AG04449 (cell line): ENCODE measurements at regions of chr3 and their contacts with region 1.

Region 1: GRCh38 chr3:168047190-168047795 is 48.4 kb downstream of the GOLIM4 start:
- DNase-seq: no peak
- H3K4me3 ChIP-seq: no peak overlapping the region
- CTCF ChIP-seq: peak; percentile 49

Region 2: DNA sequence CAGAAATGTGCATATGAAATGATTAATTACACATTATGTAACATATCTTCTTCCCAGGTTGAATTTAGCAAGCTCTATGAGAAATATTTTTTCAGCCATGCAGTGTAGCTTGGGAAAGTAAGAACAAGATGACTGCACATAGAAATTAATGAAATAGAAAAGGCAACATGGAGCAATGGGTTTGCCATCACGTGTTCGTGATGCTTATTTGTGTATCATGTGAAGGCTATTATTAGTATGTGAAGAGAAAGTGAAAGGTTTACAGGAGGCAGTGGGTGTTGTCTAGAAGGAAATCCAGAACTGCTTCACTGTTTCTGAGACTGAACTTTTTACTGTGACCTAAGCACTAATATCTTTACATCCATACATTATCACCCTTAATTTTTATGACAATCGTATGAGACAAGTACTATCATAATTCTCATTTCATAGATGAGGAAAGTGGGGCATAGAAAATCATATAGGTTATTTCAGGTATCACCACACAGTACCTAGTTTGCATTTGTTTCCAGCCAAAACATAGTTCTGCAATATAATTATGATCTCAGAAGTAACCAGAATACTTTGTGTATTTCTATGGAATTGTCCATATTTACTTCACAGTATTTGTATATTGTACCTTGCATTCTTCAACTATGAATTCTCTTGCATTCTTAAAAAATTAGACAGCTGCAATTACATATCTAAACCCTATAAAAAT is 296.9 kb before region 1 on chr3:
- CTCF ChIA-PET with region 1: no interaction called
- POLR2A ChIA-PET with region 1: no interaction called
- DNase-seq: no peak
- H3K4me3 ChIP-seq: no peak overlapping the region
- CTCF ChIP-seq: no peak

Region 3: DNA sequence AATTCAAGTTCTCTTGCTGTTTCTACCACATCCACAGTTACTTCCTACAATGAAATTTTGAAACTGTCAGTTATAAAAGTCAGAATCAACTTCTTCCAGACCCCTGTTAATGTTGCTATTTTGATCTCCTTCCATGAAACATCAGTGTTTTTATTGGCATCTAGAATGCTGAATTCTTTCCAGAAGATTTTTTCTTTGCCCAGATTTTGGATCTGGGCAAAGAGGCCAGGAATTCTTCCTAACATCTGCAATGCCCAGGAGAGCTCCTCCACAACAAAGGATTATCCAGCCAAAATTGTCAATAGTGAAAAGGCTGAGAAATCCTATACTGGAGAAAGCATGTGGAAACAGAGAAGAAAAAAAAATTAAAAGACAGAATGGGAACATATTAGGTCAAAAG is 236.3 kb before region 1 on chr3:
- CTCF ChIA-PET with region 1: no interaction called
- POLR2A ChIA-PET with region 1: no interaction called
- DNase-seq: no peak
- H3K4me3 ChIP-seq: no peak overlapping the region
- CTCF ChIP-seq: no peak

Region 4: DNA sequence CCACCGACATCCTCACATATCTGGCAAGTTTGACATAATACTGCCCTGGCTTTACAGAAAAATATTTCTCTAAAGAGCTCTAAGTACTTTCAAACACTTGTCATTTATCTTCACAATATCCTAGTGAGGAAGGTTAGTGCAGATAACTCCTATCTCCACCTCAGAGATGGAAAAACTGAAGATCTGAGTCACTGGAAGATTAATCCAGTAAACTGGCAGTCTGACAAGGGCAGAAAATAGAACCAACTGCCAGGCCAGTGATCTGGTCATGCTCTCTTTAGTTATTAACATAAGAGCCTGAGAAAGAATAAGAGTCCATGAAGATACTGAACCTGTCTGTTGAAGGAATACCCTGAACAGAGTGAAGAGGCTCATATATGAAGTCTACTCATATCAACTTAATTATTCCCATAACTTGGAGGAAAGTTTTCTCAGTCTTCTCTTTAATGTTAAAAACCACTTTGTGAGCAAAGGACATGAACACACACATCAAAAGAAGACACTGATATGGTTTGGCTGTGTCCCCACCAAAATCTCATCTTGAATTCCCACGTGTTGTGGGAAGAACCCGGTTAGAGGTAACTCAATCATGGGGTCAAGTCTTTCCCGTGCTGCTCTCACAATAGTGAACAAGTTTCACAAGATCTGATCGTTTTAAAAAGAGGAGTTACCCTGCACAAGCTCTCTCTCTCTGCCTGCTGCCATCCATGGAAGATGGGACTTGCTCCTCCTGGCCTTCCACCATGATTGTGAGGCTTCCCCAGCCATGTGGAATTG is 13.0 kb before region 1 on chr3:
- CTCF ChIA-PET with region 1: interaction called, 25 read pairs
- POLR2A ChIA-PET with region 1: no interaction called
- DNase-seq: peak; percentile 28
- H3K4me3 ChIP-seq: no peak overlapping the region
- CTCF ChIP-seq: no peak

Region 5: GRCh38 chr3:168061332-168061996 is 14.2 kb after region 1 on chr3:
- CTCF ChIA-PET with region 1: interaction called, 37 read pairs
- POLR2A ChIA-PET with region 1: no interaction called
- DNase-seq: no peak
- H3K4me3 ChIP-seq: no peak overlapping the region
- CTCF ChIP-seq: no peak

Region 6: DNA sequence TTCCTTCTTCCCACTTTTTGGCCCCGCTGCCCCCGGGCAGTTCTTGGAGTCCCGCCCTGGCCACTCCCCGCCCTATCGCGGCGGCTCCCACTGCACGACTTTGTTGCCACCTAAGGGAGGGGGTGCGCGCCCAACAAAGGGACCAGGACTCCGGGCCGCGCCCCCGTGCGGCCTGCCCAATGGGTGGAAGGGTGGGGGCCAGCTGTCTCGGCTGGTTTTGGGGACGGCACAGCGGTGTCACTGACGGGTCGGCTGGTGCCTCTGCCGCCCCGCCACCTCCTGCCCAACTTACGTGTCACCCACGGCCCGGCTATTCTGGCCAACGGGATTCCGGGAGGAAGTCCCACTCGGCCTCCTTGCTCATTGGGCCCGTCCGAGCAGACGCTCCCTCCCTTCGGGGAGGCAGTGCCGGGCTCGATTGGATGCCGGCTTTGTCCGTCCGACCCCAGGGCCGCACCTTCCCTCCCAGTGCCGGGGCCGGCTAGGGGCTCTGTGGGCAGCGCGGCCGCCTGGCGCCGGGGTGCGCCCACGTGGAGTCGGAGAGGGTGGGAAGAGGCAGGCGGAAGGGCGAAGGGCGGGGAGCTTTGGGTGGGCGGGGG is 48.4 kb after region 1 on chr3 and contains the start of gene GOLIM4:
- CTCF ChIA-PET with region 1: interaction called, 11 read pairs
- POLR2A ChIA-PET with region 1: no interaction called
- DNase-seq: peak; percentile 85
- H3K4me3 ChIP-seq: peak within 1 kb of the TSS; percentile 96
- CTCF ChIP-seq: peak; percentile 7